Activated naive CD4-positive, alpha-beta T cell treated with anti-CD3 and anti-CD28 coated beads for 36 hours (primary cell): ENCODE measurements at regions of chr10 and their contacts with region 1.

Region 1: DNA sequence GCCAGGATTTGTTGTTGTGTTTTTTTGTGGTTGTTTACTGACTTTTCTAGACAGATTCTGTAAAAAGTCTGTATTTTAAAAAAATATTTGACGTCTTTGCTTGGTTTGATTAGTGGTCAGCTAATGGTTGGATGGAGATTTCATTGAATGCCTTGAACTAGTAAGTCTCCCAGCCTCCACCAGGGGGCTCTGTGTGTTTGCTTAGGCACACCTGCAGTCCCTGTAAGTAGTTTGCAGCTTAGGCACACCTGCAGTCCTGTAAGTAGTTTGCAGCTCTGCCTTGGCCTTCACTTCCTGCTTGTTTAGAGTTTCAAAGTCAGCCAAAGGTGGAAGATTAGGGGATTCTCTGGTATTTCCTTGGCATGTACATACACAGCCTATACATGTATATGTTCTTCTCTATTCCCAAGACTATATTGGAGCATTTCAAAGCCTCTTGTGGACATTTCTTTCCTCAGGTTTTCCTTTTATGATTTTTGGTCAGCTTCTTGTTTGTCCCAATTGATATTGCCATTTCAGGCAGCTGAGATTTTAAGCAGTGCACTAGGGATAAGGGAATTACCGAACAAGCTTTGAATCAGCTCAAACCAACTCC is 101.6 kb downstream of the CCSER2 start:
- DNase-seq: peak; percentile 86
- H3K4me3 Mint-ChIP-seq: no peak overlapping the region
- H3K27ac Mint-ChIP-seq: no peak overlapping the region
- H3K4me1 Mint-ChIP-seq: peaks cover 23% of the 10 kb centered on the region
- H3K27me3 Mint-ChIP-seq: no peaks in the 10 kb centered on the region

Region 2: GRCh38 chr10:83835945-83836745 is 593.9 kb before region 1 on chr10:
- CTCF ChIA-PET with region 1: no interaction called
- intact Hi-C with region 1: no loop called
- DNase-seq: no peak
- H3K4me3 Mint-ChIP-seq: no peak overlapping the region
- H3K27ac Mint-ChIP-seq: no peak overlapping the region
- H3K4me1 Mint-ChIP-seq: no peaks in the 10 kb centered on the region
- H3K27me3 Mint-ChIP-seq: no peaks in the 10 kb centered on the region

Region 3: GRCh38 chr10:84286695-84287094 is 143.3 kb before region 1 on chr10:
- CTCF ChIA-PET with region 1: no interaction called
- intact Hi-C with region 1: no loop called
- DNase-seq: no peak
- H3K4me3 Mint-ChIP-seq: no peak overlapping the region
- H3K27ac Mint-ChIP-seq: no peak overlapping the region
- H3K4me1 Mint-ChIP-seq: no peaks in the 10 kb centered on the region
- H3K27me3 Mint-ChIP-seq: peaks cover 2% of the 10 kb centered on the region

Region 4: GRCh38 chr10:84375011-84375410 is 55.0 kb before region 1 on chr10:
- CTCF ChIA-PET with region 1: interaction called, 5 read pairs
- intact Hi-C with region 1: loop called (anchors 1 kb)
- DNase-seq: peak; percentile 70
- H3K4me3 Mint-ChIP-seq: no peak overlapping the region
- H3K27ac Mint-ChIP-seq: peak overlapping the region; percentile 30
- H3K4me1 Mint-ChIP-seq: peaks cover 45% of the 10 kb centered on the region
- H3K27me3 Mint-ChIP-seq: no peaks in the 10 kb centered on the region

Region 5: GRCh38 chr10:84415539-84416244 is 14.3 kb before region 1 on chr10:
- CTCF ChIA-PET with region 1: interaction called, 10 read pairs
- intact Hi-C with region 1: no loop called
- DNase-seq: no peak
- H3K4me3 Mint-ChIP-seq: no peak overlapping the region
- H3K27ac Mint-ChIP-seq: no peak overlapping the region
- H3K4me1 Mint-ChIP-seq: peaks cover 20% of the 10 kb centered on the region
- H3K27me3 Mint-ChIP-seq: no peaks in the 10 kb centered on the region

Region 6: DNA sequence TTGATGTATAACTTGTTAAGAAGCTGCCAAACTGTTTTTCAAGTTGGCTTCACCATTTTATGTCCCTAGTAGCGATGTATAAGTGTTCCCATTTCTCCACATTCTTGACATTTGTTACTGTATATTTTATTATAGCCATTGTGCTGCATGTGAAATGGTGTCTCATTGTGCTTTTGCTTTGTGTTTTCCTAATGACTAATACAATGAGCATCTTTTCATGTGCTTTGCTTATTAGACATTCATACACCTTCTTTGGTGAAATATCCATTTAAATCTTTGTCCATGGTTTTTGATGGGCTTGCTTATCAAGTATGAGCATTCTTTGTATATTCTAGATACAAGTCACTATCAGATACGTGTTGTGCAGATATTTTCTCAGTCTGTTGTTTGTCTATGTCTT is 101.4 kb after region 1 on chr10:
- CTCF ChIA-PET with region 1: interaction called, 54 read pairs
- intact Hi-C with region 1: no loop called
- DNase-seq: no peak
- H3K4me3 Mint-ChIP-seq: no peak overlapping the region
- H3K27ac Mint-ChIP-seq: no peak overlapping the region
- H3K4me1 Mint-ChIP-seq: peaks cover 13% of the 10 kb centered on the region
- H3K27me3 Mint-ChIP-seq: no peaks in the 10 kb centered on the region